ENCODE measurements at regions of chr7 and their contacts with region 1.

Region 1: GRCh38 chr7:13179102-13179501 is 491.7 kb downstream of the ARL4A start:
- DNase-seq: no peak
- ATAC-seq: peak in 7 of 8 donors; percentile 34 to 64 (median 52)
- H3K4me3 ChIP-seq: no peak overlapping the region
- H3K27ac ChIP-seq: no peak overlapping the region
- H3K4me1 ChIP-seq: peaks cover 0 to 8% (median 0%) of the 10 kb centered on the region in 9 donors
- H3K27me3 ChIP-seq: no peaks in the 10 kb centered on the region
- CTCF ChIP-seq: peak in 7 of 9 donors; percentile 26 to 55 (median 38)

Region 2: GRCh38 chr7:12638851-12639467 is 540.1 kb before region 1 on chr7:
- intact Hi-C with region 1: loop called in 2 of 10 experiments (anchors 5 to 10 kb)
- DNase-seq: no peak
- ATAC-seq: peak in 3 of 8 donors; percentile 41 to 52 (median 43)
- H3K4me3 ChIP-seq: no peak overlapping the region
- H3K27ac ChIP-seq: no peak overlapping the region
- H3K4me1 ChIP-seq: peaks cover 0 to 22% (median 0%) of the 10 kb centered on the region in 9 donors
- H3K27me3 ChIP-seq: peaks cover 0 to 5% (median 0%) of the 10 kb centered on the region in 7 donors
- CTCF ChIP-seq: peak; percentile 52 to 83 (median 66)

Region 3: GRCh38 chr7:12647364-12648219 is 531.5 kb before region 1 on chr7:
- intact Hi-C with region 1: loop called in 1 of 10 experiments (anchors 10 kb)
- DNase-seq: no peak
- ATAC-seq: no peak
- H3K4me3 ChIP-seq: no peak overlapping the region
- H3K27ac ChIP-seq: no peak overlapping the region
- H3K4me1 ChIP-seq: no peaks in the 10 kb centered on the region
- H3K27me3 ChIP-seq: no peaks in the 10 kb centered on the region
- CTCF ChIP-seq: no peak